MCF 10A (cell line): ENCODE measurements at regions of chrX and their contacts with region 1.

Region 1: GRCh38 chrX:145190801-145191389 is 56.4 kb upstream of the SPANXN1 start:
- DNase-seq: peak; percentile 57
- H3K4me3 Mint-ChIP-seq: no peak overlapping the region
- H3K27ac Mint-ChIP-seq: no peak overlapping the region
- H3K4me1 Mint-ChIP-seq: peaks cover 18% of the 10 kb centered on the region
- H3K27me3 Mint-ChIP-seq: no peaks in the 10 kb centered on the region
- CTCF ChIP-seq: peak; percentile 58

Region 2: GRCh38 chrX:143437439-143437838 is 1753.5 kb before region 1 on chrX:
- CTCF ChIA-PET with region 1: no interaction called
- POLR2A ChIA-PET with region 1: no interaction called
- intact Hi-C with region 1: loop called (anchors 5 kb)
- DNase-seq: peak; percentile 52
- H3K4me3 Mint-ChIP-seq: no peak overlapping the region
- H3K27ac Mint-ChIP-seq: no peak overlapping the region
- H3K4me1 Mint-ChIP-seq: no peaks in the 10 kb centered on the region
- H3K27me3 Mint-ChIP-seq: no peaks in the 10 kb centered on the region
- CTCF ChIP-seq: peak; percentile 51

Region 3: DNA sequence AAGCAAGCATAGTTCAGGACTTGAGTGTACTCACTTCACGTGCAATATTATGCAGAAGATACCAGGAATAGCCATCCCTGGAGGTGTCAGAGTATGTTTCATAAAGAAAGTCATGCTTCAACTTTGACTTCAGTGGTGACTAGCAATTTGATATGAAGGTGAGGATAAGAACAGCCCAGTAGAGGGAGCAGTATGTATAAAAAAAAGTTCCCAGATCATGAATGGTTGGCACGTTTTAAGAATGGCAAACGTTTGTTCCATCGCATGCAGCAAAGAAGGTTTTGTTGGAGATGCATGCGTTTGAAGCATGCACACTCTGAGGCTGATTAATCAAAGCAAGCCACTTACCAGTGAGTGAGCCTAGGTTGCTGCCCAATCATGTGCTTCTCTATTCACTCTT is 1521.5 kb before region 1 on chrX:
- CTCF ChIA-PET with region 1: interaction called, 6 read pairs
- POLR2A ChIA-PET with region 1: no interaction called
- intact Hi-C with region 1: loop called (anchors 5 kb)
- DNase-seq: peak; percentile 60
- H3K4me3 Mint-ChIP-seq: no peak overlapping the region
- H3K27ac Mint-ChIP-seq: no peak overlapping the region
- H3K4me1 Mint-ChIP-seq: peaks cover 5% of the 10 kb centered on the region
- H3K27me3 Mint-ChIP-seq: no peaks in the 10 kb centered on the region
- CTCF ChIP-seq: peak; percentile 44

Region 4: DNA sequence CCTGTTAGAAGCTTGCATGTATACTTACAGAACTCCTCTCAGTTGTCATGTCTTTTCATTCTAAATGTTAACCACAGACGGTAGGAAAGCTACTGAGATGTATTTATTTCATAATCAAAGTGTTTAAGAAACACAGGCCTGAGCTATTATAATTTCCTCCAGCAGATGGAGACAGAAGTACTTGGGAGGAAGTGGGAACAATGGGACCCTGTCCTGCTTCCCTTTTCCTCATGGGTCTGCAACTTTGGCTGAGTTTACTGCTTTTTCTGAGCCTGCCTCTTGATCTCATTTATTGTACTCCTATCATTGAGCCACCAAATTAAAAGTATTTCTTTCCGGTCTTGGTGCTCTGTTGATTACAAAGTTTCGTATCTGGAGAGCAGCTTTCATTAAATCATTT is 1402.6 kb before region 1 on chrX:
- CTCF ChIA-PET with region 1: interaction called, 5 read pairs
- POLR2A ChIA-PET with region 1: interaction called, 3 read pairs
- intact Hi-C with region 1: loop called (anchors 2 kb)
- DNase-seq: peak; percentile 52
- H3K4me3 Mint-ChIP-seq: no peak overlapping the region
- H3K27ac Mint-ChIP-seq: no peak overlapping the region
- H3K4me1 Mint-ChIP-seq: no peaks in the 10 kb centered on the region
- H3K27me3 Mint-ChIP-seq: no peaks in the 10 kb centered on the region
- CTCF ChIP-seq: peak; percentile 73

Region 5: GRCh38 chrX:144219035-144219434 is 971.9 kb before region 1 on chrX:
- CTCF ChIA-PET with region 1: no interaction called
- POLR2A ChIA-PET with region 1: no interaction called
- intact Hi-C with region 1: loop called (anchors 5 kb)
- DNase-seq: peak; percentile 59
- H3K4me3 Mint-ChIP-seq: no peak overlapping the region
- H3K27ac Mint-ChIP-seq: no peak overlapping the region
- H3K4me1 Mint-ChIP-seq: peaks cover 15% of the 10 kb centered on the region
- H3K27me3 Mint-ChIP-seq: no peaks in the 10 kb centered on the region
- CTCF ChIP-seq: no peak

Region 6: GRCh38 chrX:144896323-144896722 is 294.6 kb before region 1 on chrX:
- CTCF ChIA-PET with region 1: no interaction called
- POLR2A ChIA-PET with region 1: no interaction called
- intact Hi-C with region 1: loop called (anchors 10 kb)
- DNase-seq: peak; percentile 36
- H3K4me3 Mint-ChIP-seq: no peak overlapping the region
- H3K27ac Mint-ChIP-seq: no peak overlapping the region
- H3K4me1 Mint-ChIP-seq: no peaks in the 10 kb centered on the region
- H3K27me3 Mint-ChIP-seq: no peaks in the 10 kb centered on the region
- CTCF ChIP-seq: peak; percentile 31

Region 7: DNA sequence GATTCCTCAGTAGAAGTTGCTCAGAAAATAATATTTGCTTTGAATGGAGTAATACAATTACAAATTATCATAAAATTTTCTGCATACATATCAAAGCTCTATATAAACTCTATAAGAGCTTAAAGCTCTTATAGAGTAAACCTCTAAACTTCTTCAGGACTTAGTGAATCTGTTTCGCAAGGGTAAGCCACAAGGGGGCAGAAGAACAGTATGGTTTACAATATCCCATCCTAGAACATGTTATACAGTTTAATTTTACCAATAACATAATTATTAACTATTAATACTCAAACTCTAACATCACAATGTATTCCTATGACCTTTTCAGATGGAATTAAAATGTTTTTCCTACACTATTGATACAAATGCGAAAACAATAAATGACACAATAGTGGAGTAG is 22.6 kb after region 1 on chrX:
- CTCF ChIA-PET with region 1: no interaction called
- POLR2A ChIA-PET with region 1: no interaction called
- intact Hi-C with region 1: no loop called
- DNase-seq: peak; percentile 65
- H3K4me3 Mint-ChIP-seq: no peak overlapping the region
- H3K27ac Mint-ChIP-seq: no peak overlapping the region
- H3K4me1 Mint-ChIP-seq: no peaks in the 10 kb centered on the region
- H3K27me3 Mint-ChIP-seq: no peaks in the 10 kb centered on the region
- CTCF ChIP-seq: peak; percentile 49